HepG2 (cell line): ENCODE measurements at regions of chr5 and their contacts with region 1.

Region 1: DNA sequence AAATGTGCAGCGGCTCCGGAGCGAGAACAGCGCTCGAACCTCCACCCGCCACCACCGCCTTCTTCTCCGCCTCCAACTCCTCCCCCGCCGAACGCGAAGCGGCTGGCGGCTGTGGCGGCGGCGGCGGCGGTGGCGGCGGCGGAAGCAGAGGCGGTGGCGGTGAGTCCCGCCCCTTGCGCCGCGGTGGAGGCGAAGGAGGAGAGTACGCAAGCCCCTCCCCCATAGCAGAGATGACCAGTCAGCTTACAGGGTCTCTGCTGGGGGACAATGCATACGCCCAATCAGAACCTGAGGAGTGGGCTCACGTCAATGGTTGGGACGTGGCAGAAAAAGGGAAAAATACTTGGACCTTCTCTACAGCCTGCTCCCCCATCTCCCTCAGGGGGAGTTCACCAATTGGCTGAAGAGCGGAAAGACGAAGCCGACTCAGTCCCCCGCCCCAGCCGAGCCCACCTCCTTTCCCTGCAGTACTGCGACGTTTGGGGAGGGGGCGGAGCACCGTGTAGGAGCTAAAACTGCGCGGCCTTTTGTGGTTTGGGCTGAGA is at the start of gene PJA2:
- DNase-seq: peak; percentile 99
- ATAC-seq: peak; percentile 90
- H3K4me3 ChIP-seq: peak within 1 kb of the TSS; percentile 73 to 98 (median 97)
- H3K27ac ChIP-seq: peak within 1 kb of the TSS; percentile 98
- H3K4me1 ChIP-seq: peaks cover 59% of the 10 kb centered on the region
- H3K27me3 ChIP-seq: no peaks in the 10 kb centered on the region; a peak in 1 of 5 replicates
- CTCF ChIP-seq: no peak; the same call in 1 of the 2 replicates
- EP300 ChIP-seq: no peak; a peak in 1 of 4 replicates
- POLR2A ChIP-seq: peak in 1 of 2 experiments; percentile 55; a peak in 2 of 4 replicates
- RAD21 ChIP-seq: no peak
- total RNA-seq, gene PJA2: 39.4 and 70.7 TPM in 2 replicates

Region 2: GRCh38 chr5:108381954-108382783 is 1027.7 kb before region 1 on chr5 and contains the start of gene FBXL17:
- CTCF ChIA-PET with region 1: no interaction called
- POLR2A ChIA-PET with region 1: interaction called, 5 read pairs
- in situ Hi-C with region 1: no loop called
- intact Hi-C with region 1: loop called (anchors 5 kb)
- DNase-seq: peak; percentile 93
- ATAC-seq: peak; percentile 83
- H3K4me3 ChIP-seq: peak within 1 kb of the TSS; percentile 84 to 96 (median 88)
- H3K27ac ChIP-seq: peak within 1 kb of the TSS; percentile 97
- H3K4me1 ChIP-seq: peaks cover 50% of the 10 kb centered on the region
- H3K27me3 ChIP-seq: no peaks in the 10 kb centered on the region
- CTCF ChIP-seq: peak; percentile 15; the same call in 1 of the 2 replicates
- EP300 ChIP-seq: peak in 1 of 2 experiments; percentile 90; a peak in 2 of 4 replicates
- POLR2A ChIP-seq: peak; percentile 85 to 89
- RAD21 ChIP-seq: peak; percentile 51; the same call in 1 of the 2 replicates
- total RNA-seq, gene FBXL17: 5.5 and 7.9 TPM in 2 replicates

Region 3: GRCh38 chr5:108748401-108749127 is 661.4 kb before region 1 on chr5:
- CTCF ChIA-PET with region 1: no interaction called
- POLR2A ChIA-PET with region 1: no interaction called
- in situ Hi-C with region 1: no loop called
- intact Hi-C with region 1: loop called (anchors 5 kb)
- DNase-seq: peak; percentile 96
- ATAC-seq: peak; percentile 98
- H3K4me3 ChIP-seq: peak overlapping the region; percentile 80 to 83 (median 80)
- H3K27ac ChIP-seq: peak overlapping the region; percentile 81
- H3K4me1 ChIP-seq: peaks cover 14% of the 10 kb centered on the region
- H3K27me3 ChIP-seq: peaks cover 0 to 4% of the 10 kb centered on the region in 2 experiments; a peak in 1 of 5 replicates
- CTCF ChIP-seq: peak; percentile 69
- EP300 ChIP-seq: no peak
- POLR2A ChIP-seq: peak; percentile 96 to 99
- RAD21 ChIP-seq: peak; percentile 50; the same call in 1 of the 2 replicates

Region 4: GRCh38 chr5:109374625-109375024 is 35.3 kb before region 1 on chr5:
- CTCF ChIA-PET with region 1: no interaction called
- POLR2A ChIA-PET with region 1: no interaction called
- in situ Hi-C with region 1: no loop called
- intact Hi-C with region 1: loop called (anchors 5 kb)
- DNase-seq: no peak
- ATAC-seq: no peak
- H3K4me3 ChIP-seq: no peak overlapping the region
- H3K27ac ChIP-seq: no peak overlapping the region
- H3K4me1 ChIP-seq: no peaks in the 10 kb centered on the region
- H3K27me3 ChIP-seq: no peaks in the 10 kb centered on the region; a peak in 1 of 5 replicates
- CTCF ChIP-seq: no peak
- EP300 ChIP-seq: no peak
- POLR2A ChIP-seq: no peak
- RAD21 ChIP-seq: no peak